Psoas muscle (tissue), 8 donors: ENCODE measurements at regions of chr3 and their contacts with region 1.

Region 1: DNA sequence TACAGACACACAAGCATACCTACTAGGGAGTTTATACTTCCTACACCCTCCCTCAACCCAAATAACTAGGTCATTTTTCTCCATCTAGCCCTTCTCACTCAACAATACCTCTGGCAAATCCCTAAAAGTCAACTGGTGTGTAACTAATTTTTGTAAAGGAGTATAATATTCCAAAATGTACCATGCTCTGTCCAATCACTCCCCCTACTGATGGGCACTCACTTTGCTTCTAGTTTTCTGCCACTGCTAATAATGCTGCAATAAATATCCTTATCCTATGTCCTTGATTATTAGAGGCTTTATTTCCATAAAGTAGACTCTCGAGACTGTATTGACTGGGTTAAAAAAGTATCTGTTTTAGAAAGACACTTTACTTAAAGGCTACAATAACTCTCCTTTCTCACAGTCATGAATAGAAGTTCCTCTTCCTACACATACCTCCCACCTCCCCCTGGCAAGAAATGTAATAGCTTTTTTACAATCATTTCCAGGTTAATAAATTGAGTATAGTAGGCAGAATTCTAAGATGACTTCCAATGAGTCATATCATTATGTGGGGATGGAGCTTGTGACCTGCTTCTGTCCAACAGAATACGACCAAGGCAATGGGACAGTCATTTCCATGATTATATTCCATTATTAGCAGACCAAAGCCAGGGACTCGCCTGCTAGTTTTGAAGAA is 30.0 kb downstream of the SHQ1 start:
- DNase-seq: no peak
- ATAC-seq: no peak
- H3K4me3 ChIP-seq: no peak overlapping the region
- H3K27ac ChIP-seq: no peak overlapping the region
- H3K4me1 ChIP-seq: peaks cover 45% of the 10 kb centered on the region
- H3K27me3 ChIP-seq: no peaks in the 10 kb centered on the region
- CTCF ChIP-seq: peak; percentile 47

Region 2: GRCh38 chr3:71710906-71711494 is 1107.2 kb before region 1 on chr3:
- intact Hi-C with region 1: loop called in 1 of 2 experiments (anchors 5 kb)
- DNase-seq: no peak
- ATAC-seq: peak; percentile 55 to 79 (median 60)
- H3K4me3 ChIP-seq: no peak overlapping the region
- H3K27ac ChIP-seq: no peak overlapping the region
- H3K4me1 ChIP-seq: peaks cover 21% of the 10 kb centered on the region
- H3K27me3 ChIP-seq: no peaks in the 10 kb centered on the region
- CTCF ChIP-seq: peak; percentile 61

Region 3: DNA sequence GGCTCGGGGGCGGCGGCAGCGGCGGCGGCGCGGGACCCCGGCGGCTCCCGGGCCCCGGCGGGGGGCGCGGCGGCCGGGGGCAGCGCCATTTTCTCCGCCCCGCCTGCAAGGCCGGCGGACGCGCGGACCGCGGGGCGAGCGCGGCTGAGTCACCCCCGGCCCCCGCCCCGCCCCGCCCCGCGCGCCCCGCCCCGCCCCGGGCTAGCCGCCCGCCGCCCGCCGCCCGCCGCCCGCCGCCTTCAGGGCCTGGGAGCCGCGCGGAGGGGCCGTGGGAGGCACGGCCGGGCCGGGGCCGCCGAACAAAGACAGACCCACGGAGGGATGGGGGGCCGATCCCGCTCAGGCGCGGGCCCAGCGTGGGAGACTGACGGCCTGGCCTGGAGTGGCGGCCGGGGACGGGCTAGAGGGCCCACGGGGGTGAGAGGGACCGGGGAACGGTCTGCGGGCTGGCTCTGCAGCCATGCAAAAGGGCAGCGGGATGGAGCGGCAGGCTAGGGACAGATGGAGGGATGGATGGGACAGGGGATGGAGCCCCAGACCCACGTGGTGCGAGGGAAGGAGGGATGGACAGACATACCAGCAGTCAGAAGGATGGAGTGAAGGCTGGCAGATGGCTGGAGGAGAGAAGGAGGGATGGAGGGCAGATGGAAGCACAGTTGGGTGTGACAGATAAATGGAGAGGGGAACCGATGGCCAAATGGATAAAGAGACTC is 1092.8 kb before region 1 on chr3 and contains the start of gene EIF4E3:
- intact Hi-C with region 1: loop called in 1 of 2 experiments (anchors 10 kb)
- DNase-seq: peak; percentile 47 to 60
- ATAC-seq: peak; percentile 58 to 69 (median 65)
- H3K4me3 ChIP-seq: peak within 1 kb of the TSS; percentile 92
- H3K27ac ChIP-seq: peak within 1 kb of the TSS; percentile 82
- H3K4me1 ChIP-seq: peaks cover 15% of the 10 kb centered on the region
- H3K27me3 ChIP-seq: no peaks in the 10 kb centered on the region
- CTCF ChIP-seq: no peak
- total RNA-seq, gene EIF4E3: 38.5 to 57.3 (median 49.8) TPM

Region 4: GRCh38 chr3:71875461-71875947 is 942.7 kb before region 1 on chr3:
- intact Hi-C with region 1: loop called in 1 of 2 experiments (anchors 1 kb)
- DNase-seq: peak; percentile 71 to 79
- ATAC-seq: peak; percentile 88 to 98 (median 92)
- H3K4me3 ChIP-seq: no peak overlapping the region
- H3K27ac ChIP-seq: no peak overlapping the region
- H3K4me1 ChIP-seq: no peaks in the 10 kb centered on the region
- H3K27me3 ChIP-seq: no peaks in the 10 kb centered on the region
- CTCF ChIP-seq: peak; percentile 84

Region 5: GRCh38 chr3:71955240-71956068 is 862.8 kb before region 1 on chr3:
- intact Hi-C with region 1: loop called (anchors 5 to 10 kb)
- DNase-seq: peak; percentile 60 to 76
- ATAC-seq: peak; percentile 70 to 88 (median 74)
- H3K4me3 ChIP-seq: no peak overlapping the region
- H3K27ac ChIP-seq: no peak overlapping the region
- H3K4me1 ChIP-seq: no peaks in the 10 kb centered on the region
- H3K27me3 ChIP-seq: no peaks in the 10 kb centered on the region
- CTCF ChIP-seq: peak; percentile 66

Region 6: DNA sequence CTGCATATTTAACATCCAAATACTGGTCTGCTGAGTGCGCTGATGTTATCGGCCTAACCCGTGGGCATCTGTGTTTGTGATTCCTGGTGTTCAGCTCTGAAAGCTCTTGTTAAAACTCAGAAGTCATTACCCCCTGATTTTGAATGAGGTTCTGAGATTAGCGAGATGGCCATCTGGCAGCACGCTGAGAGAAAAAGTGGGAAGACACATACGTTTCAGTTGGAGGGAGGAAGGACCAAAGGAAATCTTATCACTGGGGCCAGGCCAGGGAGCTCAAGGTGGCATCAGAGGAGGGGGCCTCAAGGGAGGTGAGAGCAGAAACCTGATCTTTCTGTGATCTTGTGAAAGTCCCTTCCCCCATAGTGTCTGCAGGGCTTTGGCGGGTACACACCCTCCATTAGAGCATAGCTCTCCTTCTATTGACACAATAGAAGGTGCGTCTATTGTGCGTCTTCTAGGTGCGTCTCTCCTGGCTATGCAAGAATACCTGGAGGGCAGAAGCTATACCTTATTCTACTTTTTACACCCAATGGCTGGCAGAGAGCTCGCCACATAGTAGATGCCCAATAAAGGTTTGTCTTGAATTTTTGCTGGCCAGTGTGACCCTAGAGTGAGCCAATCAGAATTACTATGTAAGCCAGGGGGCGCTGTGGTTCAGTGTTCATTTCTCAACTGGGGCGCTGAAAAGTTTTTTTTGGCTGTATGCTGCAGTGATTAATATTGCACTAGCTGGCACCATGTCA is 152.4 kb before region 1 on chr3:
- intact Hi-C with region 1: loop called in 1 of 2 experiments (anchors 5 kb)
- DNase-seq: no peak
- ATAC-seq: peak in 1 of 4 donors; percentile 46
- H3K4me3 ChIP-seq: no peak overlapping the region
- H3K27ac ChIP-seq: no peak overlapping the region
- H3K4me1 ChIP-seq: peaks cover 1% of the 10 kb centered on the region
- H3K27me3 ChIP-seq: no peaks in the 10 kb centered on the region
- CTCF ChIP-seq: peak; percentile 23

Region 7: GRCh38 chr3:72903004-72903403 is 84.8 kb after region 1 on chr3:
- intact Hi-C with region 1: no loop called
- DNase-seq: no peak
- ATAC-seq: no peak
- H3K4me3 ChIP-seq: no peak overlapping the region
- H3K27ac ChIP-seq: no peak overlapping the region
- H3K4me1 ChIP-seq: peaks cover 5% of the 10 kb centered on the region
- H3K27me3 ChIP-seq: no peaks in the 10 kb centered on the region
- CTCF ChIP-seq: no peak